Psoas muscle (tissue), 8 donors: ENCODE measurements at regions of chr7 and their contacts with region 1.

Region 1: GRCh38 chr7:114085592-114086501 is 167.0 kb upstream of the PPP1R3A start:
- DNase-seq: peak; percentile 81 to 94
- ATAC-seq: peak; percentile 78 to 86 (median 83)
- H3K4me3 ChIP-seq: peak overlapping the region; percentile 85
- H3K27ac ChIP-seq: peak overlapping the region; percentile 93
- H3K4me1 ChIP-seq: peaks cover 12% of the 10 kb centered on the region
- H3K27me3 ChIP-seq: no peaks in the 10 kb centered on the region
- CTCF ChIP-seq: no peak

Region 2: DNA sequence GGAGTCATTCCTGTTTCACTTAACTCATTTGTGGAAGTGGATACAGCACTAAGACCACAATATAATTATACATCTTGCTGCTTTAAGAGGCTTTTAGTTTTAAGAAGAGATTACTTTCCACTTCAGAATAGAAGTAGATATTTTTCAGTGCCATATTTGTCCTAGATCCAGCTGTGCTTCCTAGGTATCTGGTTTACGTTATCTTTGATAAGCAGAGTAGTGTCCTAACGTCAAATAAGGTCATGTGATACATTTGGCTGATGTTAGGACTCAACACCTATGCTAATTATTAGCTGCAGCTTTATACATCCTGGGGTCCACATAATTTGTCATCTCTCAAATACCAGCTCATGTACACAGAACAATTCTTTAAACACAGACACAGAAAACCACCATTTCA is 771.3 kb before region 1 on chr7:
- intact Hi-C with region 1: no loop called
- DNase-seq: no peak
- ATAC-seq: no peak
- H3K4me3 ChIP-seq: no peak overlapping the region
- H3K27ac ChIP-seq: no peak overlapping the region
- H3K4me1 ChIP-seq: no peaks in the 10 kb centered on the region
- H3K27me3 ChIP-seq: no peaks in the 10 kb centered on the region
- CTCF ChIP-seq: no peak

Region 3: DNA sequence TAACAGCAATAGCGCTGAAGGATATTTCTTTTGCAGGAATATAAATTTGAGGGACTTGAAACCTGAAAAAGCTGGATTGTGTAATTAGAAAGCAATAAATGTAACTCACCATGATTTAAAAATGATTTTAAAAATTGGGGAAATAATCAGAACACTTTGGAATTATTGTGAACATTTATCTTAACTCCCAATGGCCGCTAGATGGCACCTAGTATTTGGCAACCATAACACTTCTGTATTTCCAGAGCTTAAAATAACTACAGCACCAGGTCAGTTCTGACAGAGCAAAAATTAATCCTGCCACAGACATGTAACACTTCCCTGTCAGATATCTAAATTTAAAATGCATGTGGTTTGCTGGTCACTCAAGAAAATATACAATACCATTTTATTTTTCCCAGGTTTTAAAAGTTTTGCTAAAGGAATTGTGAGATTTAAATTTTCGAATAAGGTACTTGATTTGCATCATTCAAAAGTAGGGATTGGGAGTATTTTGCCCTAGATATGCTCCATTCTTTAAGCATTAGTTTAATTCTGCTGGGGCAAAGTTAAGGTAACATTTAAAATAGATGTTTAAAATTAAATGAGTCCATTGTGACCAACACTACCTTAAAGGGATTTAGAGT is 311.6 kb before region 1 on chr7:
- intact Hi-C with region 1: loop called in 1 of 2 experiments (anchors 10 kb)
- DNase-seq: no peak
- ATAC-seq: peak; percentile 93 to 100 (median 98)
- H3K4me3 ChIP-seq: peak overlapping the region; percentile 35
- H3K27ac ChIP-seq: peak overlapping the region; percentile 79
- H3K4me1 ChIP-seq: peaks cover 5% of the 10 kb centered on the region
- H3K27me3 ChIP-seq: no peaks in the 10 kb centered on the region
- CTCF ChIP-seq: peak; percentile 58

Region 4: GRCh38 chr7:113918946-113919345 is 166.9 kb before region 1 on chr7 and contains the start of gene PPP1R3A:
- intact Hi-C with region 1: loop called (anchors 5 to 10 kb)
- DNase-seq: peak in 1 of 2 donors; percentile 55
- ATAC-seq: peak; percentile 92 to 98 (median 94)
- H3K4me3 ChIP-seq: peak within 1 kb of the TSS; percentile 68
- H3K27ac ChIP-seq: peak within 1 kb of the TSS; percentile 86
- H3K4me1 ChIP-seq: peaks cover 8% of the 10 kb centered on the region
- H3K27me3 ChIP-seq: no peaks in the 10 kb centered on the region
- CTCF ChIP-seq: peak; percentile 58
- total RNA-seq, gene PPP1R3A: 52.6 to 124 (median 61.0) TPM

Region 5: GRCh38 chr7:114218283-114218682 is 132.4 kb after region 1 on chr7:
- intact Hi-C with region 1: no loop called
- DNase-seq: no peak
- ATAC-seq: no peak
- H3K4me3 ChIP-seq: no peak overlapping the region
- H3K27ac ChIP-seq: no peak overlapping the region
- H3K4me1 ChIP-seq: no peaks in the 10 kb centered on the region
- H3K27me3 ChIP-seq: no peaks in the 10 kb centered on the region
- CTCF ChIP-seq: no peak

Region 6: DNA sequence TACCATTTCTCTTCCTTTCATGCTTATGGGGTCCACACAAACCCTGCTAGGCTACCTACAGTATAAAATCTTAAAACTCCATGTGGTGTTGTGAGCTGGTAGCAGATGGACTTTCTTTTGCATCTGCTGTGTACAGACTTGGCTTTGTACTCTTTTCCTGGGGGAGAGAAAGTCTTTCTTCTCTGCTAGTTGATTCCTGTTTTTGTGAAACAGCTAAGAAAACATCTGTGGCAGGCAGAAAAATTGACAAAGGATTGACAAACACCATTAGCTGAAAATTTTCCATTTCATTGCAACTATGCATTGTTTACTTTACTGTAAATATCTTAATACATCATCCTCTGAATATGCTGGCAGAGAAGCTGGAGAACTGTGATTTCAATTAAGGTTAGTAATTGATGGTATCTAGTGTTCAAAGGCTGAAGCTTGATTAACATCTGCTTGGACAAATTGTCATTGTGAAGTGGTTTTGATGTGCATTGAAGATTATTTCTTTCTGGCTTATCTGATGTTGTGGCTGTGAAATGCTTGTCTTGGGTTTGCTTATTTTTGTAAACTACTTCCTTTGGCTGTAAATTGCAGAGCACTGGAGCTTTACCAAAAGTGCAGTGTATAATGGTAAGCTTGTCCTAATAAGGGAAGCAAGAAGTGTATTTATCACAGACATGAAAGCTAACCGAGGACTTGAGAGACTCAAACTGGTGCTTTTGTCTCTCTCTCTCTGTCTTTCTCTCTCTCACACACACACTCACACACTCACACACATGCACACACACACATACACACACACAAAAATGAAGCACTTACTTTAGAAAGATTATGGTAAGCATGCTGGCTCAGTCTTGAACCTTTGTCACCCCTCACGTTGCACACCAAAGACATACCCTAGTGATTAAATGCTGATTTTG is 328.6 kb after region 1 on chr7 and contains the start of gene FOXP2:
- intact Hi-C with region 1: loop called (anchors 2 kb)
- DNase-seq: no peak
- ATAC-seq: peak in 3 of 4 donors; percentile 15 to 32 (median 17)
- H3K4me3 ChIP-seq: peak within 1 kb of the TSS; percentile 57
- H3K27ac ChIP-seq: peak within 1 kb of the TSS; percentile 88
- H3K4me1 ChIP-seq: peaks cover 29% of the 10 kb centered on the region
- H3K27me3 ChIP-seq: no peaks in the 10 kb centered on the region
- CTCF ChIP-seq: no peak
- total RNA-seq, gene FOXP2: 5.1 to 6.7 (median 6.2) TPM

Region 7: GRCh38 chr7:114554781-114555537 is 469.1 kb after region 1 on chr7:
- intact Hi-C with region 1: loop called in 1 of 2 experiments (anchors 10 kb)
- DNase-seq: no peak
- ATAC-seq: peak; percentile 95 to 99 (median 98)
- H3K4me3 ChIP-seq: peak overlapping the region; percentile 13
- H3K27ac ChIP-seq: peak overlapping the region; percentile 67
- H3K4me1 ChIP-seq: peaks cover 11% of the 10 kb centered on the region
- H3K27me3 ChIP-seq: no peaks in the 10 kb centered on the region
- CTCF ChIP-seq: no peak

Region 8: GRCh38 chr7:114663502-114663901 is 577.7 kb after region 1 on chr7:
- intact Hi-C with region 1: loop called in 1 of 2 experiments (anchors 10 kb)
- DNase-seq: no peak
- ATAC-seq: peak in 1 of 4 donors; percentile 63
- H3K4me3 ChIP-seq: no peak overlapping the region
- H3K27ac ChIP-seq: no peak overlapping the region
- H3K4me1 ChIP-seq: no peaks in the 10 kb centered on the region
- H3K27me3 ChIP-seq: no peaks in the 10 kb centered on the region
- CTCF ChIP-seq: no peak